ENCODE measurements at regions of chr18 and their contacts with region 1.

Region 1: GRCh38 chr18:22977847-22978701 is 44.9 kb downstream of the RBBP8 start:
- DNase-seq: no peak
- H3K4me3 ChIP-seq: no peak overlapping the region
- H3K27ac ChIP-seq: no peak overlapping the region
- H3K4me1 ChIP-seq: no peaks in the 10 kb centered on the region
- H3K27me3 ChIP-seq: no peaks in the 10 kb centered on the region
- CTCF ChIP-seq: no peak

Region 2: GRCh38 chr18:22800551-22800951 is 177.5 kb before region 1 on chr18:
- intact Hi-C with region 1: loop called (anchors 10 kb)
- DNase-seq: no peak
- H3K4me3 ChIP-seq: no peak overlapping the region
- H3K27ac ChIP-seq: peak overlapping the region; percentile 45
- H3K4me1 ChIP-seq: peaks cover 7% of the 10 kb centered on the region
- H3K27me3 ChIP-seq: no peaks in the 10 kb centered on the region
- CTCF ChIP-seq: no peak